ENCODE measurements at regions of chr1 and their contacts with region 1.

Region 1: GRCh38 chr1:43979528-43980254 is 681 bp downstream of the B4GALT2 start:
- DNase-seq: peak; percentile 53
- H3K4me3 ChIP-seq: peak overlapping the region; percentile 59 to 65 (median 61)
- H3K27ac ChIP-seq: peak overlapping the region; percentile 64
- H3K4me1 ChIP-seq: peaks cover 58% of the 10 kb centered on the region
- H3K27me3 ChIP-seq: no peaks in the 10 kb centered on the region
- CTCF ChIP-seq: no peak

Region 2: DNA sequence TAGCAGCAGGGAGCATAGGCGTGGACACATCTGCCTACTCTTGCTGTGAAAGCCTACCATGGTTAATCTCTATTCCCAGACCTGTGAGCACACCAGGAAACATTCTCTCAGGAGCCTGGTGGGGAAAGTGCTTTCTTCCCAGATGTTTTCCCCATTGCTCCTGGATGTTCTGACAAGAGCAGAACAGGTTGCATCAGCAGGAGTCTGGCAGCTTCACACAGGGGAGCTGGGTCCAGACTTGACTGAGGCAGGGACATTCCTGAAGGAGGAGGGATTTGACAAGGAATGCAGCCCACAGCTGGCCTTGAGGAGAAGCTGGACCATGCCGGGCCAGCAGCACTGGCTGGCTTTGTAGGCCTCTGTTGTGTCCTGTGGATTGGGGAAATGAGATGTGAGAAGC is 67.1 kb before region 1 on chr1:
- CTCF ChIA-PET with region 1: no interaction called
- dilution Hi-C with region 1: no loop called
- in situ Hi-C with region 1: no loop called
- intact Hi-C with region 1: loop called (anchors 2 kb)
- DNase-seq: peak; percentile 83
- H3K4me3 ChIP-seq: peak overlapping the region in 1 of 3 experiments; percentile 9
- H3K27ac ChIP-seq: peak overlapping the region; percentile 75
- H3K4me1 ChIP-seq: peaks cover 41% of the 10 kb centered on the region
- H3K27me3 ChIP-seq: no peaks in the 10 kb centered on the region
- CTCF ChIP-seq: no peak

Region 3: DNA sequence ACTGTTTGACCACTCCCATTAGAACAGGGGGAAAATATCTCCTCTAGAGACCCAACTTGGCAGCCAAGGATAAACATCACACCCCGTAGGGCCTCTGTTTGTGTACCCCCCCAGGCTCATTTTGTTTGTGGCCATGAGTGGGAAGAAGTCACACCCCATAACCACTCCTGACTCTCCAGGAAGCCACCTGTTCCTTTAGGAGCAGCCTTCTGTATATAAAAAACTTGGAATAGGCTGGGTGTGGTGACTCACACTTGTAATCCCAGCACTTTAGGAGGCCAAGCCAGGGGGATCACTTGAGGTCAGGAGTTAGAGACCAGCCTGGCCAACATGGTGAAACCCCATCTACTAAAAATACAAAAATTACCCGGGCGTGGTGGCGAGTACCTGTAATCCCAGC is 80.3 kb after region 1 on chr1:
- CTCF ChIA-PET with region 1: no interaction called
- dilution Hi-C with region 1: no loop called
- in situ Hi-C with region 1: no loop called
- intact Hi-C with region 1: no loop called
- DNase-seq: no peak
- H3K4me3 ChIP-seq: no peak overlapping the region
- H3K27ac ChIP-seq: no peak overlapping the region
- H3K4me1 ChIP-seq: peaks cover 12% of the 10 kb centered on the region
- H3K27me3 ChIP-seq: no peaks in the 10 kb centered on the region
- CTCF ChIP-seq: no peak